Calu3 (cell line): ENCODE measurements at regions of chr2 and their contacts with region 1.

Region 1: GRCh38 chr2:54041135-54041534 is 70.3 kb upstream of the PSME4 start:
- DNase-seq: no peak
- H3K4me3 Mint-ChIP-seq: no peak overlapping the region
- H3K27ac Mint-ChIP-seq: no peak overlapping the region
- H3K4me1 Mint-ChIP-seq: peaks cover 21% of the 10 kb centered on the region
- H3K27me3 Mint-ChIP-seq: no peaks in the 10 kb centered on the region
- CTCF ChIP-seq: no peak

Region 2: GRCh38 chr2:53987336-53987921 is 53.7 kb before region 1 on chr2:
- CTCF ChIA-PET with region 1: no interaction called
- intact Hi-C with region 1: loop called (anchors 5 kb)
- DNase-seq: peak; percentile 26
- H3K4me3 Mint-ChIP-seq: no peak overlapping the region
- H3K27ac Mint-ChIP-seq: peak overlapping the region; percentile 75
- H3K4me1 Mint-ChIP-seq: peaks cover 19% of the 10 kb centered on the region
- H3K27me3 Mint-ChIP-seq: no peaks in the 10 kb centered on the region
- CTCF ChIP-seq: no peak

Region 3: GRCh38 chr2:54015798-54016699 is 25.1 kb before region 1 on chr2:
- CTCF ChIA-PET with region 1: no interaction called
- intact Hi-C with region 1: no loop called
- DNase-seq: no peak
- H3K4me3 Mint-ChIP-seq: no peak overlapping the region
- H3K27ac Mint-ChIP-seq: no peak overlapping the region
- H3K4me1 Mint-ChIP-seq: no peaks in the 10 kb centered on the region
- H3K27me3 Mint-ChIP-seq: no peaks in the 10 kb centered on the region
- CTCF ChIP-seq: no peak

Region 4: DNA sequence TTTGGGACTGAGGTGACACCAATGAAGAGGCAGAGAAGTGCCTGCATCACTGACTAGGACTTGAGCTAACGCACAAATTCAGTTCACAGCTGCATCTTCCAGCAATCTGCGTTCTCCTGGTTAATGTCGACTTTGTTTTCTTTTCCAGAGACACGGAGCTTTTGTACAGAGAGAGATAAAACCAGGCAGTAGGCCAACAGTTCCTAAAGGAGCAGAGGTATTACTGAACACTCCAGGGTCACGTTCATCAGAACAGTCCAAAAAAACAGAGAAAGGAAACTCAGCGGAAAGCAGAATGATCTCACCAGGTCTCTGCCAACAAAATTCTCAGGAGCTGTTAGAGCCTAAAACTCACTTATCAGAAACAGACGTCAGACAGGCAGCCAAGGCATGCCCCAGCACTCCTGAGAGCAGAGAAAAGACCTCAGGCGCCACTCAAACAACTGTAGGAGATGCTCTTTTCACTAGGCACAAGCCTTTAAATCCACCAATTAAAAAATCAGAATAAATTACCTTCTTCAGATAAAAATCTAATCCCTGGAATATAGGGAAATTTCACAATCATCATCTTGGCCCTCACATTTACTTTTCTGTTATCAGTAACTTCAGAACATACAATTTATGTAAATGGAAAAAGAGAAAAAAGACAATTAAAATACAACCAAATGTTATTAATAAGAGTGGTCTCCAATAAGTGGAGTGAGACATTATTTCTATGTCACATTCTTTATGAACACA is 319.1 kb after region 1 on chr2:
- CTCF ChIA-PET with region 1: no interaction called
- intact Hi-C with region 1: no loop called
- DNase-seq: no peak
- H3K4me3 Mint-ChIP-seq: no peak overlapping the region
- H3K27ac Mint-ChIP-seq: no peak overlapping the region
- H3K4me1 Mint-ChIP-seq: no peaks in the 10 kb centered on the region
- H3K27me3 Mint-ChIP-seq: peaks cover 14% of the 10 kb centered on the region
- CTCF ChIP-seq: no peak